ENCODE measurements at regions of chr12 and their contacts with region 1.

Region 1: DNA sequence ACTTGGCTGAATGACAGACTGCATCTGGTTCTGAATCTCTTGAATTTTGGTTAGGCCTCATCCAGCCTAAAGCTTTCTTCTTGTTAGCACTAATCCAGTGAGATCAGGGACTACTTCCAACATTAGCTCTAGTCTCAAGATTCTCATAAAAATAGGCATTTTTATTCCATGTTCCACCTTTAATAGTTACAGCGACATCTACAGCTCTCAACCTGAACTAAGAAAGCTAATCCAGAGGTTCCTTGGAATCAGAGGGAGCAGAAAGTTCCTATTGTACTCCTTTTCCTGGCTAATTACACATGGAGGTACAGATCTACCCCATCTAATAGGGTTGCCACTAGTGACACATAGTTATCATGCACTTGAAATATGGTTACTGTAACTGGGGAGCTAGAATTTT is 391.9 kb downstream of the RMST start:
- DNase-seq: no peak
- H3K4me3 ChIP-seq: no peak overlapping the region
- H3K27ac ChIP-seq: no peak overlapping the region
- H3K4me1 ChIP-seq: no peaks in the 10 kb centered on the region
- H3K27me3 ChIP-seq: no peaks in the 10 kb centered on the region
- CTCF ChIP-seq: no peak

Region 2: GRCh38 chr12:97501422-97501821 is 353.1 kb before region 1 on chr12:
- CTCF ChIA-PET with region 1: interaction called, 15 read pairs
- dilution Hi-C with region 1: no loop called
- in situ Hi-C with region 1: no loop called
- intact Hi-C with region 1: no loop called
- DNase-seq: no peak
- H3K4me3 ChIP-seq: no peak overlapping the region
- H3K27ac ChIP-seq: no peak overlapping the region
- H3K4me1 ChIP-seq: no peaks in the 10 kb centered on the region
- H3K27me3 ChIP-seq: no peaks in the 10 kb centered on the region
- CTCF ChIP-seq: no peak

Measured in mammary epithelial cell (primary cell).